B cell (primary cell): ENCODE measurements at regions of chr12 and their contacts with region 1.

Region 1: DNA sequence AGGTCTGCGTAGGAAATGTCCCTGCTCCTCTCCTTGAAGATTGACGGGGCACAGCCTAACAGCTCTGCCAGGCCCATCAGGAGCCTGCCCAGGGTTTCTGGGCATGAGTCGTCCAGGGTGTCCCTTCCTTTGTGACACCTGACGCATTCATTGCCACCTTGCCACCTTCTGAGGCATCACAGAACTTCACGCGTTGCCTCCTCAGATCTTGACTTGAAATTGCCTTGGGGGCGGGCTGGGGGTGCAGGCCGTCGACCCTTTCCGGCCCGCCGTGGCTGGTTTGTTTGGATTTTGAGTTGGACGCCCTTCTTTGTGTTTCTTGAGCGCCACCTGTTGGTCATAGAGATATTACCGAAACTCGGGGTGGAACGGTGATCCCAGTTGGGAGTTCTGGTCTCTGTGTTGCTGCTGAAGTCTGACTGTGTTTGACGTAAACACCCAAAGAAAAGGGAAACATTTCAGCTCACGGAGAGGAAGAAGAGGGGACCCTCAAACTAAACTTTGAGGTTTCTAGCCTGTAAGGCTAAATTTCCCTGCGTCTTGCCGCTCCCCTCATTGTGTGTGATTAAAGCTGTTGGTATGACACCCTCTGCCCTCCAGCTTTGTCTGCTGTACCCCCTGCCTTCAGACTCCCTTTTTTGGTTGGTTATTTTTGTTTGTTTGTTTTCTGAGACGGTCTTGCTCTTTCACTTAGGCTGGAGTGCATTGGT is 44.6 kb downstream of the MLXIP start:
- DNase-seq: peak; percentile 82
- ATAC-seq: peak; percentile 65
- H3K4me3 ChIP-seq: no peak overlapping the region
- H3K4me3 Mint-ChIP-seq: no peak overlapping the region
- H3K27ac ChIP-seq: no peak overlapping the region
- H3K27ac Mint-ChIP-seq: peak overlapping the region; percentile 62
- H3K4me1 ChIP-seq: peaks cover 7 to 10% of the 10 kb centered on the region in 2 donors
- H3K4me1 Mint-ChIP-seq: peaks cover 21% of the 10 kb centered on the region
- H3K27me3 ChIP-seq: no peaks in the 10 kb centered on the region
- H3K27me3 Mint-ChIP-seq: no peaks in the 10 kb centered on the region
- CTCF ChIP-seq: peak; percentile 85

Region 2: GRCh38 chr12:121917979-121918678 is 205.1 kb before region 1 on chr12 and contains the start of gene CFAP251:
- CTCF ChIA-PET with region 1: interaction called, 41 read pairs
- POLR2A ChIA-PET with region 1: no interaction called
- intact Hi-C with region 1: loop called (anchors 1 kb)
- DNase-seq: peak; percentile 96
- ATAC-seq: peak; percentile 98
- H3K4me3 ChIP-seq: peak within 1 kb of the TSS in 4 of 5 experiments; percentile 28 to 64 (median 52)
- H3K4me3 Mint-ChIP-seq: peak within 1 kb of the TSS; percentile 92
- H3K27ac ChIP-seq: peak within 1 kb of the TSS in 1 of 2 donors; percentile 77
- H3K27ac Mint-ChIP-seq: peak within 1 kb of the TSS; percentile 80
- H3K4me1 ChIP-seq: peaks cover 8 to 11% of the 10 kb centered on the region in 2 donors
- H3K4me1 Mint-ChIP-seq: peaks cover 11% of the 10 kb centered on the region
- H3K27me3 ChIP-seq: no peaks in the 10 kb centered on the region
- H3K27me3 Mint-ChIP-seq: no peaks in the 10 kb centered on the region
- CTCF ChIP-seq: peak; percentile 86
- total RNA-seq, gene CFAP251: 1.4 and 1.6 TPM in 2 replicates

Region 3: DNA sequence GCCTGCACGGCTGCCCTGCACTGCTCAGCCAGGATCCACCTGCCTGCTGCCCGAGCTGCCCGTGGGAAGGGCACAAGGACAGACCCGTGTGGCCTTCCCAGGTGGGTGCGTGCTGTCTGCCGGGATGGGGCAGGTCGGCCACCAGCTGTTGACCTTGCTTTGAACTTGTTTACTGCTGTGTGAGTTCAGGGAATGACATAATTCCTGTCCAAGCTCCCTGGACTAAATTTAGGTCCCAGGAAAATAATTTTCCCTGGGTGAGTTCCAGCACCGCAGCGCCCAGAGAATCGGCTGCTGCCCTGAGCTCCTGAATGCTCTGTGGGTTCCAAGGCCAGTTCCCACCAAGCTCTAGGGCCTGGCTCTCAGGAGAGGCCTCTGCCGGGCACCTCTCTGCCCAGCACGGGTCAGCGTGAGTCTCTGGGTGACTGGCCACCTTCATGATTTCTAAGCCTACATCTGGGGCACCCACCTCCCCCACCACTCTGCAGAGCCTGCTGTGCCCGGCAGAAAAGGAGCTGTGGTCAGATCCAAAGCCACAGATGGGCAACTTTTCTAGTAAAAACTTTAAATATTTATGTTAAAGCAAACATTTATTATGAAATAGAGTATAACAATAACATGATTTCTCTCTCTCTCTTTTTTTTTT is 71.9 kb before region 1 on chr12:
- CTCF ChIA-PET with region 1: interaction called, 154 read pairs
- POLR2A ChIA-PET with region 1: interaction called, 3 read pairs
- intact Hi-C with region 1: no loop called
- DNase-seq: no peak
- ATAC-seq: no peak
- H3K4me3 ChIP-seq: no peak overlapping the region
- H3K4me3 Mint-ChIP-seq: no peak overlapping the region
- H3K27ac ChIP-seq: no peak overlapping the region
- H3K27ac Mint-ChIP-seq: no peak overlapping the region
- H3K4me1 ChIP-seq: peaks cover 0 to 4% of the 10 kb centered on the region in 2 donors
- H3K4me1 Mint-ChIP-seq: peaks cover 1% of the 10 kb centered on the region
- H3K27me3 ChIP-seq: no peaks in the 10 kb centered on the region
- H3K27me3 Mint-ChIP-seq: no peaks in the 10 kb centered on the region
- CTCF ChIP-seq: no peak

Region 4: DNA sequence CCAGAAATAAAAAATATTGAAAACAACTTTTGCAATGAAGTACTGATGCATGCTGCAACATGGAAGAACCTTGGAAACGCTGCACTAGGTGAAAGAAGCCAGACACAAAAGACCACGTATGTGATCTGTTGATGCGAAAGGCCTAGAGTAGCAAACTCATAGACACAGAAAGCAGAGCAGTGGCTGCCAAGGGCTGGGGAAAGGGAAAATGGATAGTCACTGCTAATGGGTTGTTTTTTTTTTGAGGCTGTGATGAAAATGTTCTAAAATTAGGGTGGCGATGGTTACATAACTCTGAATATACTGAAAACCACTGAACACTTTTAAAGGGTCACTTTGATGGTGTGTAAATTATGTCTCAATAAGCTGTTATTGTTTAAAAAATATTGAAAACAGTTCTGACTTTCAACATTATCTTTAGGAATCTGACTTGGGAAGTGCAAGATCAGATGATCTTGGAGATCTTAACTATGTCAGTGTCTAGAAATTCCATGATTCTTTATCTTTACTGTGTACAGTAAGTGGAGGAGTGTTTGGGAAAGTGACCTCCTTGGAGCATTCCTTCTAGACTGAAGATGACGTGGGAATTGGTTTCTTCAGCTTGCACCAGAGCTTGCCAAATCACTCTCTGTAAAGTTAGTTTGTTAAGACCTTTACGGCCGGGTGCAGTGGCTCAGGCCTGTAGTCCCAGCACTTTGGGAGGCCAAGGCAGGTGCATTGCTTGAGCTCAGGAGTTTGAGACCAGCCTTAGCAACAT is 32.3 kb before region 1 on chr12:
- CTCF ChIA-PET with region 1: interaction called, 18 read pairs
- POLR2A ChIA-PET with region 1: no interaction called
- intact Hi-C with region 1: no loop called
- DNase-seq: no peak
- ATAC-seq: no peak
- H3K4me3 ChIP-seq: no peak overlapping the region
- H3K4me3 Mint-ChIP-seq: no peak overlapping the region
- H3K27ac ChIP-seq: no peak overlapping the region
- H3K27ac Mint-ChIP-seq: peak overlapping the region; percentile 42
- H3K4me1 ChIP-seq: peaks cover 26 to 33% of the 10 kb centered on the region in 2 donors
- H3K4me1 Mint-ChIP-seq: peaks cover 48% of the 10 kb centered on the region
- H3K27me3 ChIP-seq: no peaks in the 10 kb centered on the region
- H3K27me3 Mint-ChIP-seq: no peaks in the 10 kb centered on the region
- CTCF ChIP-seq: no peak

Region 5: DNA sequence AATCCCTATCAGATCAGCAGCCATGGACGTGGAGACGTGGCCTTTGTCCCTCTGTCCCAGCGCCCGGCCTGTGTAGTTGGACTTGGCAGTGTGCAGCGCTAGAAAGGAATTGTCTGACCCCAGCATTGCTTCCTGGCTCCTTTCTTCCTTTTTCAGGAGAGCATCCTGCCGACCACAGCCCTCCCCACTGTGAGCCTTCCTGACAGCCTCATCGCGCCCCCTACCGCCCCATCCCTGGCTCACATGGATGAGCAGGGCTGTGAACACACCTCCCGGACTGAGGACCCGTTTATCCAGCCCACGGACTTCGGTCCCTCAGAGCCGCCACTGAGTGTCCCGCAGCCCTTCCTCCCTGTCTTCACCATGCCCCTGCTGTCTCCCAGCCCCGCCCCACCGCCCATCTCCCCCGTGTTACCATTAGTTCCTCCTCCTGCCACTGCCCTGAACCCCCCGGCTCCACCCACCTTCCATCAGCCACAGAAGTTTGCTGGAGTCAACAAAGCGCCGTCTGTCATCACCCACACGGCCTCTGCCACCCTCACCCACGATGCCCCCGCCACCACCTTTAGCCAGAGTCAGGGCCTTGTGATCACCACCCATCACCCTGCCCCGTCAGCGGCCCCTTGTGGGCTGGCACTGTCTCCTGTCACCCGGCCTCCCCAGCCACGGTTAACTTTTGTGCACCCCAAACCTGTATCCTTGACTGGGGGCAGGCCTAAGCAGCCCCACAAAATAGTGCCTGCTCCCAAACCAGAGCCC is 10.2 kb after region 1 on chr12:
- CTCF ChIA-PET with region 1: interaction called, 10 read pairs
- POLR2A ChIA-PET with region 1: no interaction called
- intact Hi-C with region 1: no loop called
- DNase-seq: no peak
- ATAC-seq: no peak
- H3K4me3 ChIP-seq: no peak overlapping the region
- H3K4me3 Mint-ChIP-seq: no peak overlapping the region
- H3K27ac ChIP-seq: no peak overlapping the region
- H3K27ac Mint-ChIP-seq: no peak overlapping the region
- H3K4me1 ChIP-seq: no peaks in the 10 kb centered on the region
- H3K4me1 Mint-ChIP-seq: no peaks in the 10 kb centered on the region
- H3K27me3 ChIP-seq: no peaks in the 10 kb centered on the region
- H3K27me3 Mint-ChIP-seq: no peaks in the 10 kb centered on the region
- CTCF ChIP-seq: no peak